Vagina (tissue), 2 donors: ENCODE measurements at regions of chr1 and their contacts with region 1.

Region 1: DNA sequence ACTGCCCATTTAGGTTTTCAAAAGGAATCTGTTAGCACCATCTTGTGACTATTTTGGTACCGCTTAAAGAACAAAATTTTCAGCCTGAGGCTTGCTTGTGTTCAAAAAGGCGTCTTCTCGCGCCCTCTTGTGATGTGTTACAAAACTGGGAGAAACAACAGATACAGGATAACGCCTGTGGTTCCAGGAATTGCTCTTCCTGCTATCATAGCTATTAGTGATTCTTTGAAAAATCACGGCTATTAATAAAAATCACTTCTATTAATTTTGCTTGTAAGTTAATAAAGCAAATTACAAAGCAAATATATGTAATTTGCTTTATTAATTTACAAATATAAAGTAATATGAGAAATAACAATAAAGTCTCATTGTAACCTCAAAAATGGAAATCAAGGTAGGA is 82.2 kb upstream of the ABCD3 start:
- DNase-seq: no peak
- H3K4me3 ChIP-seq: no peak overlapping the region
- H3K27ac ChIP-seq: no peak overlapping the region
- H3K4me1 ChIP-seq: no peaks in the 10 kb centered on the region
- H3K27me3 ChIP-seq: no peaks in the 10 kb centered on the region
- CTCF ChIP-seq: peak; percentile 90 to 93 (median 91)
- POLR2A ChIP-seq: no peak

Region 2: GRCh38 chr1:94045465-94046056 is 290.4 kb before region 1 on chr1:
- intact Hi-C with region 1: loop called (anchors 5 kb)
- DNase-seq: no peak
- H3K4me3 ChIP-seq: peak overlapping the region in 1 of 2 donors; percentile 19
- H3K27ac ChIP-seq: peak overlapping the region; percentile 55
- H3K4me1 ChIP-seq: peaks cover 23% of the 10 kb centered on the region
- H3K27me3 ChIP-seq: no peaks in the 10 kb centered on the region
- CTCF ChIP-seq: peak; percentile 30 to 79 (median 48)
- POLR2A ChIP-seq: no peak

Region 3: GRCh38 chr1:94061513-94062443 is 274.2 kb before region 1 on chr1:
- intact Hi-C with region 1: loop called (anchors 5 kb)
- DNase-seq: no peak
- H3K4me3 ChIP-seq: no peak overlapping the region
- H3K27ac ChIP-seq: peak overlapping the region; percentile 62
- H3K4me1 ChIP-seq: peaks cover 29% of the 10 kb centered on the region
- H3K27me3 ChIP-seq: no peaks in the 10 kb centered on the region
- CTCF ChIP-seq: peak; percentile 81 to 82 (median 82)
- POLR2A ChIP-seq: no peak

Region 4: GRCh38 chr1:94270801-94271203 is 65.1 kb before region 1 on chr1:
- intact Hi-C with region 1: no loop called
- DNase-seq: no peak
- H3K4me3 ChIP-seq: no peak overlapping the region
- H3K27ac ChIP-seq: no peak overlapping the region
- H3K4me1 ChIP-seq: peaks cover 21% of the 10 kb centered on the region
- H3K27me3 ChIP-seq: no peaks in the 10 kb centered on the region
- CTCF ChIP-seq: no peak
- POLR2A ChIP-seq: no peak